ENCODE measurements at regions of chr9 and their contacts with region 1.

Region 1: DNA sequence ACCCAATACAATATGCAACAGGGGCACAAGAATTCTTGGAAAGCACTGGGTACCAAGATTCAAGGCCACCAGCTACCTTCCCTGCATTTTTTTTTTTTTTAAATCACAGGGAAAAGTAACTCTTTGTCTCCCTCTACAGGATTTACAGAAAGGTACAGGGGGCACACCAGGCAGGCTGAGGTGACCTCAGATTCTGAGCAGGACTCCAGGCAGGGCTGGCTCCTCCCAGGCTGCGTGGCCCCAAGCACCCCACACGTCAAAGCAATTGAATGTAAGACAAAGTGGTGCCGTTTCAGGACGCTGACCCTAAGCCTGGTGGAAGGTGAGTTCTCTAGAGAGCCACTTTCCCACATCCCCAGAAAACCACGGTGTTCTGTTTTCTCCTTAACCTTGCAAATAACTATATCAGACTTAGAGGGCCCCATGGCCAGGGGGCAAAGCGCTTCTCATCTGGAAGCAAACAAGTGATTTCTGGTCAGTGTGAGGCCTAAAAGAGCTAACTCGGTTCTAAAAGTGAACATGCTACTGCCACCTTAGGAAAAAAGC is 222.6 kb downstream of the ROR2 start:
- DNase-seq: peak; percentile 12
- H3K4me3 Mint-ChIP-seq: no peak overlapping the region
- H3K27ac Mint-ChIP-seq: no peak overlapping the region
- H3K4me1 Mint-ChIP-seq: peaks cover 8% of the 10 kb centered on the region
- H3K27me3 Mint-ChIP-seq: no peaks in the 10 kb centered on the region

Region 2: GRCh38 chr9:91681461-91682305 is 45.7 kb before region 1 on chr9:
- intact Hi-C with region 1: loop called (anchors 5 kb)
- DNase-seq: peak; percentile 57
- H3K4me3 Mint-ChIP-seq: peak overlapping the region; percentile 53
- H3K27ac Mint-ChIP-seq: no peak overlapping the region
- H3K4me1 Mint-ChIP-seq: peaks cover 5% of the 10 kb centered on the region
- H3K27me3 Mint-ChIP-seq: peaks cover 27% of the 10 kb centered on the region